ENCODE measurements at regions of chr17 and their contacts with region 1.

Region 1: DNA sequence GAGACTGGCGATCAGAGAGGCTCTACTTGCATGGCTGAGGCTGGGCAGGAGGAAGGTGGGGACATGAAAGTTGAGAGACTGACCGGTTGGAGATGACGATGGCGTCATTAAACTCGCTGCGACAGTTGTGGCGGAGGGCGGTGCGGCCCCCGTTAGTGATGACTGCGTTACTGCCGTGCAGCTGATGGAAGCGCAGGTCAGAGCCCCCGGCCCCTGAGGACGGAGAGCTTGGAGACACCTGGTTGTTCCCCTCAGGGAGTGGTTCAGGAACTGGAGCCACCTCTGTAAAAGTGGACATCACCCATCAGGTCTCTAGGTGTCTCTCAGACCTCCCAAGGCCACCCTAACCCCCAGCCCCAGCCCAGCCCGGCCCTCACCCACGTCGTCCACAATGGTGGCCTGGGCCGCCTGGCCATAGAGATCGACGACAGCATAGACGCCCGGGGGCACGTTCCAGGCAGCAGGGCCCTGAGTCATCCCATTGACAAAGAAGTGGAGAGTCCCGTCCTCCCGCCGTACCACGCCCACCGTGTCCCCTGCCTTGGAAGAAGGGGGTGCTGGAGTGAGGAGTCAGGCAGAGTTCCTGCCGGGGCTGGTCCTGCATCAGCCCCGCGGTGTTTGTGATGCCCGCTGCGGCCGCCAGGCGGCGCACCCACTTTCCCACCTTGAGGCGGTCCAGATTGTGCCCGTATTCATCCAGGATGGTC is 5.3 kb downstream of the NEURL4 start:
- DNase-seq: peak; percentile 90
- H3K4me3 ChIP-seq: no peak overlapping the region; a peak in 1 of 4 replicates
- H3K27ac ChIP-seq: no peak overlapping the region
- H3K4me1 ChIP-seq: peaks cover 0 to 7% of the 10 kb centered on the region in 2 experiments; a peak in 1 of 4 replicates
- H3K27me3 ChIP-seq: no peaks in the 10 kb centered on the region
- CTCF ChIP-seq: peak; percentile 82
- EP300 ChIP-seq: no peak
- RAD21 ChIP-seq: peak; percentile 57

Region 2: GRCh38 chr17:7336240-7337175 is 12.6 kb after region 1 on chr17 and contains the start of gene ACAP1:
- CTCF ChIA-PET with region 1: interaction called, 27 read pairs
- POLR2A ChIA-PET with region 1: interaction called, 4 read pairs
- DNase-seq: no peak
- H3K4me3 ChIP-seq: no peak within 1 kb of the TSS
- H3K27ac ChIP-seq: no peak within 1 kb of the TSS
- H3K4me1 ChIP-seq: no peaks in the 10 kb centered on the region
- H3K27me3 ChIP-seq: peaks cover 18% of the 10 kb centered on the region
- CTCF ChIP-seq: no peak
- EP300 ChIP-seq: no peak
- RAD21 ChIP-seq: no peak
- polyA plus RNA-seq, gene ACAP1: 0.71 and 6.4 TPM in 2 replicates

Region 3: GRCh38 chr17:7396147-7396546 is 72.3 kb after region 1 on chr17:
- CTCF ChIA-PET with region 1: no interaction called
- POLR2A ChIA-PET with region 1: no interaction called
- DNase-seq: no peak
- H3K4me3 ChIP-seq: no peak overlapping the region
- H3K27ac ChIP-seq: no peak overlapping the region
- H3K4me1 ChIP-seq: peaks cover 0 to 9% of the 10 kb centered on the region in 2 experiments; a peak in 1 of 4 replicates
- H3K27me3 ChIP-seq: no peaks in the 10 kb centered on the region
- CTCF ChIP-seq: no peak
- EP300 ChIP-seq: no peak
- RAD21 ChIP-seq: no peak

Measured in SK-N-SH (cell line).